ENCODE measurements at regions of chr5 and their contacts with region 1.

Region 1: GRCh38 chr5:75536147-75537025 is 24.7 kb downstream of the POLK start:
- DNase-seq: no peak

Region 2: DNA sequence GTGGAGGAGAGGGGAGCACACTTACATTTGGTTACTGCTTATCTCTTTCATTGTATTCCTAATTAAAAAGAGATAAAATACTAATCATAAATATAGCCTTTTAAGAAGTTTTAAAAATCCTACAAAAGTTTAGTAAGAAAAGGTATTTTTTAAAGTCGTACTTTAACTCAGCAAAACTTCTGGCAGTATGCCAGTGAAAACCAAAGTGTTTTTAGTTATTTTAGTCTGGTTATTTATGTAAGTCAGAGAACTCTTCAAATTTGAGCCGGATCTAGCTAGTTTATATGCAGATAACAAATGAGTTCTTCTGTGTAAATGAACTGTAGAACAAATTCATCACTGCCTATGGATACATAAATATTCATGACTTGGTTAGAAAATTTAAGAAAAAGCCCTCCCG is 38.4 kb after region 1 on chr5:
- intact Hi-C with region 1: no loop called
- DNase-seq: no peak

Region 3: DNA sequence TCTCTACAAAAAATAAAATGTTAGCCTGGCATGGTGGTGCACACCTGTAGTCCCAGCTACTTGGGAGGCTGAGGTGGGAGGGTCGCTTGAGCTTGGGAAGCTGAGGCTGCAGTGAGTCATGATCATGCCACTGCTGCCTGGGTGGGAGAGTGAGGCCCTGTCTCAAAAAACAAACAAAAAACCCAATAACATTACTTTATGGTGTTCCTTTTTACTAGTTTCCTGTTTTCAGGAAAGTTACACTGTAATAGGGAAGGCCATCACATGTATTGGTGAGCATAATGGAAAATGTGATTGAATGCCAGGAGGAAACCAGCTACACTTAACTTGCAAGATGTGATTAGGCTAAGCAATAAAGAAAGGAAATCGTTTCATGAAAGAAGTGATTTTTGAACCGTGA is 589.5 kb after region 1 on chr5:
- intact Hi-C with region 1: loop called in 1 of 2 experiments (anchors 5 kb)
- DNase-seq: no peak